Heart right ventricle (tissue), 16 donors: ENCODE measurements at regions of chr9 and their contacts with region 1.

Region 1: DNA sequence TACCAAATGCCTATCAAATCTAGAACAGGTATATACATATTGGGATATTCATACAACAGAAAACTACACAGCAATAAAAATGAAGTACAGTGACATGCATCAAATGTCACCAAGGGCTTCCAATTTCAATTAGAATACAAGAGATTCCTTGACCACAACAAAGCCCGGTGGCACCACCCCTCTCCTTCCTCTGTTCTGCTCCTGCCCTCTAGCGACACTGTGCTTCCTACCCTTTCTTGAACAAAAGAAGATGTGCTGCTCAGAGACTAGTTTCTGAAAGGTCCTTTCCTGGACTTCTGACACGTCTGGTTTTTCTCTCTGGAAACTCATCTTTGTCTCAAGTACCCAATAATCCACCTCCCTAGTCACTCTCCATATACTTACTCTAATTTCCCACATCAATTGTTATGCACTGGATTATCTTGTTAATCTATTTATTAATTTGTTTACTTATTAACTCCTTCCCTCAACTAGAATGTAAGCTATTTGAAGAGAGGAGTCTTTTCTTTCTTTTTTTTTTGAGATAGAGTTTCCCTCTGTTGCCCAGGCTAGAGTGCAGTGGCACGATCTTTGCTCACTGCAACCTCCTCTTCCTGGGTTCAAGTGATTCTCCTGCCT is 70.4 kb upstream of the CTSV start:
- DNase-seq: peak in 1 of 2 donors; percentile 30
- ATAC-seq: peak in 3 of 8 donors; percentile 55 to 67 (median 55)
- H3K4me3 ChIP-seq: no peak overlapping the region
- H3K27ac ChIP-seq: no peak overlapping the region
- H3K4me1 ChIP-seq: no peaks in the 10 kb centered on the region
- H3K27me3 ChIP-seq: peaks cover 0 to 18% (median 0%) of the 10 kb centered on the region in 7 donors
- CTCF ChIP-seq: peak; percentile 12 to 60 (median 49)

Region 2: GRCh38 chr9:96859461-96860198 is 249.7 kb before region 1 on chr9:
- intact Hi-C with region 1: loop called in 9 of 10 experiments (anchors 1 to 10 kb)
- DNase-seq: no peak
- ATAC-seq: no peak
- H3K4me3 ChIP-seq: no peak overlapping the region
- H3K27ac ChIP-seq: no peak overlapping the region
- H3K4me1 ChIP-seq: peaks cover 0 to 6% (median 4%) of the 10 kb centered on the region in 9 donors
- H3K27me3 ChIP-seq: no peaks in the 10 kb centered on the region
- CTCF ChIP-seq: no peak